ENCODE measurements at regions of chr1 and their contacts with region 1.

Region 1: GRCh38 chr1:1038694-1039093 is 18.8 kb downstream of the AGRN start:
- DNase-seq: no peak
- H3K4me3 ChIP-seq: no peak overlapping the region
- H3K4me3 Mint-ChIP-seq: no peak overlapping the region
- H3K27ac Mint-ChIP-seq: peak overlapping the region; percentile 36
- H3K4me1 ChIP-seq: peaks cover 18% of the 10 kb centered on the region
- H3K4me1 Mint-ChIP-seq: no peaks in the 10 kb centered on the region
- H3K27me3 ChIP-seq: no peaks in the 10 kb centered on the region
- H3K27me3 Mint-ChIP-seq: no peaks in the 10 kb centered on the region
- CTCF ChIP-seq: no peak

Region 2: GRCh38 chr1:1024771-1025451 is 13.8 kb before region 1 on chr1:
- CTCF ChIA-PET with region 1: no interaction called
- POLR2A ChIA-PET with region 1: no interaction called
- intact Hi-C with region 1: no loop called
- DNase-seq: peak; percentile 87 to 92
- H3K4me3 ChIP-seq: no peak overlapping the region
- H3K4me3 Mint-ChIP-seq: peak overlapping the region; percentile 56
- H3K27ac Mint-ChIP-seq: peak overlapping the region; percentile 84
- H3K4me1 ChIP-seq: peaks cover 41% of the 10 kb centered on the region
- H3K4me1 Mint-ChIP-seq: peaks cover 13% of the 10 kb centered on the region
- H3K27me3 ChIP-seq: no peaks in the 10 kb centered on the region
- H3K27me3 Mint-ChIP-seq: no peaks in the 10 kb centered on the region
- CTCF ChIP-seq: no peak

Region 3: DNA sequence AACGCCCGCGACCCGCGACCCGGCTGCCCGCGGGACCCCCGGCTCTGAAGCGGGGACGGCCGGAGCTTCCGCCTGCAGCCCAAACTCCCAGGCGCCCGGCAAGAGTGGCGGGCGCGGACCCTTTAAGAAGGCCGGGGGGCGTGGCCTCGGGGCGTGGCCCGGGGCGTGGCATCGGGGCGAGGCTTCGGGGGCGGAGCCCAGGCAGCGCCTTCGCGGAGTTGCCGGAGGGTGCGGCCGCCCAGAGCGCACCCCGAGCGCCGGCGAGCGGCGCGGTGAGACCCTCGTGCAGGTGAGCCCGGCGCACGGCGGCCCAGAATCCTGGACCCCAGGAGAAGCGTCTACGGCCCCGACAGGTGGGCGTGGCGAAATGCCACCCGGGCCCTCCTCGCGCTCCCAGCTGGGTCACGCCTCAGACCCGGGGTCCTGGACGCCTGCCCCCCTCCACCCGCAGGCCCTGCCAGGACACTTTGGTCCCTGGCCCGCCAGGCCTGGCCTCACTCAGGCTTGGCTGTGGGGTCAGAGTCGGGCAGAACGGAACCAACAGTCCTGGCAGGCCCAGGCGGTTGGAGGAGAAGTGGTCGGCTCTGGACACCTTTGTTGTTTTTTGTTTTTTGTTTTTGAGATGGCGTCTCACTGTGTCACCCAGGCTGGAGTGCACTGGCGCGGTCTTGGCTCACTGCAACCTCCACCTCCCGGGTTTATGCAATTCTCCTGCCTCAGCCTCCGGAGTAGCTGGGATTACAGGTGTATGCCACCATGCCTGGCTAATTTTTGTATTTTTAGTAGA is 21.0 kb after region 1 on chr1:
- CTCF ChIA-PET with region 1: interaction called, 3 read pairs
- POLR2A ChIA-PET with region 1: no interaction called
- intact Hi-C with region 1: loop called (anchors 2 kb)
- DNase-seq: peak; percentile 86 to 92
- H3K4me3 ChIP-seq: peak overlapping the region; percentile 64
- H3K4me3 Mint-ChIP-seq: peak overlapping the region; percentile 80
- H3K27ac Mint-ChIP-seq: no peak overlapping the region
- H3K4me1 ChIP-seq: peaks cover 31% of the 10 kb centered on the region
- H3K4me1 Mint-ChIP-seq: peaks cover 7% of the 10 kb centered on the region
- H3K27me3 ChIP-seq: no peaks in the 10 kb centered on the region
- H3K27me3 Mint-ChIP-seq: no peaks in the 10 kb centered on the region
- CTCF ChIP-seq: no peak

Region 4: GRCh38 chr1:1175221-1176062 is 136.7 kb after region 1 on chr1:
- CTCF ChIA-PET with region 1: no interaction called
- POLR2A ChIA-PET with region 1: no interaction called
- intact Hi-C with region 1: no loop called
- DNase-seq: peak in 1 of 2 experiments; percentile 17
- H3K4me3 ChIP-seq: no peak overlapping the region
- H3K4me3 Mint-ChIP-seq: no peak overlapping the region
- H3K27ac Mint-ChIP-seq: no peak overlapping the region
- H3K4me1 ChIP-seq: peaks cover 6% of the 10 kb centered on the region
- H3K4me1 Mint-ChIP-seq: peaks cover 7% of the 10 kb centered on the region
- H3K27me3 ChIP-seq: no peaks in the 10 kb centered on the region
- H3K27me3 Mint-ChIP-seq: no peaks in the 10 kb centered on the region
- CTCF ChIP-seq: no peak

Measured in Caco-2 (cell line).